ENCODE measurements at regions of chr1 and their contacts with region 1.

Region 1: DNA sequence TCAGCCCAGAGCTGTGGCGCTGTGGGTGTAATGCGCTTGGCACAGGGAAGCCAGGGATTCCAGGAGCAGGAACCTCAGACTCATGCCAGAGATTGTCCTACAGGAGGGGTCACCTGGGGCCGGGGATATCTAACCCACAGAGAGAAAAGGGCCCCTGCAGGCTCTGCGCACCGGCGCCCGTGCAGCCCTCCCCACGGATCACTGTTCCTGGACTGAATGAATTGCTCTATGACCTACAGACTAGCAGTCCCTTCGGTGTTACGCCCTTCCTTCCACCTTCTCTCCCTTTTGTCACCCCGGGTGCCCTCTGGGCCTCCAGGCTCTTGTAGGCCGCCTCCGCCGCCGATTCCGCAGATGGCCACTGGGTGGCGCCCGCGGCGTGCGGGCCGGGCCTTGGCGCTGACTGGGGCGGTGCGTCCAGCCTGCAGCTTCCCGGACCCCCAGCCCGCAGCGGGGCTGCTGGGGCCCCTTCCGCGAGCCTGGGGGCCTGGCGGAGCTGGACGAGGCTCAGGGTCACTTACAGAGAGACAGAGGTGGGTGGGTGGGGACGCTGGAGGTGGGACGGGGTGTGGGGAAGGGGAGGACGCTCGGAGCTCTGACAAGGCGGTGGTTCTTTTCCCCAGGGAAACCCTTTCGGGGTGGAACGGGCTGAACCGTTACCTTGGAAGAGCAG is 101.3 kb downstream of the IER5 start:
- H3K4me3 ChIP-seq: peak overlapping the region; percentile 25
- H3K27ac ChIP-seq: no peak overlapping the region
- H3K4me1 ChIP-seq: no peaks in the 10 kb centered on the region
- CTCF ChIP-seq: peak; percentile 91

Region 2: DNA sequence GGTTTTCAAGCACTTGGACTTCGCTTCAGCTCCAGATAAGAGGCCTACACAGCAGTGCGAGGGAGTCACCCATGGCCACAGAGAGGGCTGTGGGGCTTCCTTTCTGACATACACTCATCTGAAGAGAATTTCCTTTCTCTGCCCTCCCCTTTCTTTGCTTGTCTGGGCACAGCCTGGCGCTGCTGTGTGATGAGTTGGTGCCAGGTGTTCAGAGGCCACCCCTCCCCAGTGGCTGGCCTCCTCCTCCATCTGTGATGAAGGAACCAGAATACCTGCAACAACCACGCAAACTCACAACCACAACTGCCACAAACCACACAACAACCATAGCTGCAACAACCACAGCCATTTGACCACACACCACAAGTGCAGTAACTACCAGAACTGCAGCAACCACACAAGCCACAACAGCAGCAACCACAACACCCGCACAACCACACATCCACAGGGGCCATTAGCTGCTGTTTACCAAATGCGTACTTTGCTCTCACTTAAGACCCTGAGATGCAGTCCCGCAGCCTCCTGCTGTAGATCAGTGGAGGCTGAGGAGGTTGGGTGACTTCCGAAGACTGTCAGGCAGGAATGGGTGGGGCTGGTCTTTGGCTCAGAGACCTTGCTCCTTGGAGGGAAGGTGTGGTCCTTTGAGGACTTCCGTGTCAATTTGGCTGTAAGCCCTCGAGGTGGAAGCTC is 30.2 kb before region 1 on chr1:
- CTCF ChIA-PET with region 1: no interaction called
- POLR2A ChIA-PET with region 1: no interaction called
- H3K4me3 ChIP-seq: no peak overlapping the region
- H3K27ac ChIP-seq: no peak overlapping the region
- H3K4me1 ChIP-seq: no peaks in the 10 kb centered on the region
- CTCF ChIP-seq: no peak

Region 3: DNA sequence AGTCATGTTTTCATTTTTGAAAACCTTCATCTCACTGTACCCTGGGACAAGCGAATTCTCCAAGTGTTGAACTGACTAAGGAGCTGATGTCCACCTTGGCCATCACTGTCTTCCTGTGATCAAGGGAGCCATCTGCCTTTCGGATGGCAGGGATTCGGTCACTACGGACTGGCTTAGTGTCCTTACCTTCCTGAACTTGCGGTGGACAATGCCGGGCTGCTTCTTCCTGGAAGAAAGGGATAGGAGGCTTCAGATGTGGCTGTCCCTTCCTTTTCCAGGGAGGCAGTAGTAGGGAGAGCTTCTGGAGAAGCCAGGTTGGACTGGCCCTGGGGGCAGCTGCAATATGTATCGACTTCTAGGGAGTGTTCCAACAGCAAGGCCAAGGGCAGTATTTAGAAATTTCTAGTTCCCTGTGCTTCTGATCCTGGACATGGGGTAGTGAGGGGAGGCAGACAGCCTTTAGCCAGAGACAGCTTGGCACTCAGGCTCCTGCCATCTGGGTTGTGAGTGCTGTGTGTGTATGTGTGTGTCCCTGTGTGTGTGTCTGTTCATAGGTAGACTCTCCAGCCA is 13.2 kb after region 1 on chr1:
- CTCF ChIA-PET with region 1: interaction called, 11 read pairs
- POLR2A ChIA-PET with region 1: no interaction called
- H3K4me3 ChIP-seq: no peak overlapping the region
- H3K27ac ChIP-seq: no peak overlapping the region
- H3K4me1 ChIP-seq: no peaks in the 10 kb centered on the region
- CTCF ChIP-seq: no peak

Region 4: DNA sequence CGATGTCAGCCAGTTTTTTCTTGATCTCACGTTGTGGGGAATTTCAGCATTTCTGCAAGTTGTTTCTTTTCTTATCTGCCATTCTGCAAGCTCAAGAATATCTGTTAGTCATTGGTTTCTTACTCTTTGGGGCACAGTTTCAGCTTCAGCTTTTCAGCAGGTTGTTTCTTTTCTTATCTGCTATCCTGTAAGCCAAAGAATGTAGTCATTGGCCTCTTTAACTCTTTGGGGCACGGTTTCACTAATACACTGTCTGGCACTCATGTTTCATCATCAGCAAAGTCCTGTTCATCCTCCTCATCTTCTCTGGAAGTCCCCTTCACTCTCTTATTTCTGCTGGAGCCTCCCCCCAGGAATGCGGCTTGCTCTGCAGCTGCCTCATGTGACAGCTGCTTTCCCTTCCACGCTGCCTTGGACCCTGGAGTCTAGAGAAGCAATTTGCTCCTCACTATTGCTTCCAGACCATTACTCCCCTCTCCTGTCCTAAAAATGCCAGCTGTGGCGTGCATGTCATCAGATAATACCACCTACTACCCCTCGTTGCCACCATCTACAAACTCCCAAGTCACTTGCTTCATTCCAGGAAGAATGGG is 226.5 kb after region 1 on chr1:
- CTCF ChIA-PET with region 1: interaction called, 18 read pairs
- POLR2A ChIA-PET with region 1: no interaction called
- H3K4me3 ChIP-seq: no peak overlapping the region
- H3K27ac ChIP-seq: no peak overlapping the region
- H3K4me1 ChIP-seq: no peaks in the 10 kb centered on the region
- CTCF ChIP-seq: no peak

Region 5: GRCh38 chr1:181424786-181425403 is 235.1 kb after region 1 on chr1:
- CTCF ChIA-PET with region 1: interaction called, 33 read pairs
- POLR2A ChIA-PET with region 1: no interaction called
- H3K4me3 ChIP-seq: no peak overlapping the region
- H3K27ac ChIP-seq: no peak overlapping the region
- H3K4me1 ChIP-seq: no peaks in the 10 kb centered on the region
- CTCF ChIP-seq: peak; percentile 93

Region 6: GRCh38 chr1:181430015-181430885 is 240.4 kb after region 1 on chr1:
- CTCF ChIA-PET with region 1: interaction called, 33 read pairs
- POLR2A ChIA-PET with region 1: no interaction called
- H3K4me3 ChIP-seq: no peak overlapping the region
- H3K27ac ChIP-seq: no peak overlapping the region
- H3K4me1 ChIP-seq: no peaks in the 10 kb centered on the region
- CTCF ChIP-seq: no peak